CD4-positive, alpha-beta memory T cell (primary cell): ENCODE measurements at regions of chr2 and their contacts with region 1.

Region 1: GRCh38 chr2:224869601-224870233 is 153.6 kb upstream of the CCDC195 start:
- DNase-seq: no peak
- H3K4me3 ChIP-seq: no peak overlapping the region
- H3K4me3 Mint-ChIP-seq: no peak overlapping the region
- H3K27ac ChIP-seq: no peak overlapping the region
- H3K27ac Mint-ChIP-seq: peak overlapping the region in 1 of 7 donors; percentile 13
- H3K4me1 ChIP-seq: no peaks in the 10 kb centered on the region
- H3K4me1 Mint-ChIP-seq: peaks cover 3 to 13% (median 7%) of the 10 kb centered on the region in 4 donors
- H3K27me3 ChIP-seq: no peaks in the 10 kb centered on the region
- H3K27me3 Mint-ChIP-seq: no peaks in the 10 kb centered on the region

Region 2: DNA sequence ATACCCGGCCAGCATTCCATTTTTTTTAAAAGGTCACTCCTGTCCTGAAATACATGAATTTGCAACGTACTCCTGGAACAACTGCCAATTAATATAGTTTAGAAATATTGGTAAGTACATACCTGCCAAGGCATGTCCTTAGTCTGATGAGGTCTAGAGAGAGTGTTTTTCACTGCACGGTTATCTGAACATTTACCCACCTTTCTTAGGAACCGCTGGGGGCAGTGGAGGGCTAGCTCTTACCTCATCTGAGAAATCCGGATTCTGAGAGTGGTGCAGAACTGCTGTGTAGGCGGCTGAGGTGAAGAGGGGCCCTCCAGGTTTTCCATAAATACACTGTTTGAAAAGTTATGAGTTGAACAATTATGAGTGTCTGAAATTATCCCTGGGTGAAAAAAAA is 20.5 kb before region 1 on chr2:
- CTCF ChIA-PET with region 1: no interaction called
- POLR2A ChIA-PET with region 1: no interaction called
- intact Hi-C with region 1: loop called (anchors 2 kb)
- DNase-seq: no peak
- H3K4me3 ChIP-seq: no peak overlapping the region
- H3K4me3 Mint-ChIP-seq: no peak overlapping the region
- H3K27ac ChIP-seq: no peak overlapping the region
- H3K27ac Mint-ChIP-seq: peak overlapping the region in 1 of 7 donors; percentile 65
- H3K4me1 ChIP-seq: no peaks in the 10 kb centered on the region
- H3K4me1 Mint-ChIP-seq: peaks cover 0 to 1% (median 0%) of the 10 kb centered on the region in 4 donors
- H3K27me3 ChIP-seq: no peaks in the 10 kb centered on the region
- H3K27me3 Mint-ChIP-seq: no peaks in the 10 kb centered on the region

Region 3: GRCh38 chr2:225164401-225165050 is 294.8 kb after region 1 on chr2:
- CTCF ChIA-PET with region 1: no interaction called
- POLR2A ChIA-PET with region 1: no interaction called
- intact Hi-C with region 1: no loop called
- DNase-seq: no peak
- H3K4me3 ChIP-seq: no peak overlapping the region
- H3K4me3 Mint-ChIP-seq: no peak overlapping the region
- H3K27ac ChIP-seq: no peak overlapping the region
- H3K27ac Mint-ChIP-seq: no peak overlapping the region
- H3K4me1 ChIP-seq: no peaks in the 10 kb centered on the region
- H3K4me1 Mint-ChIP-seq: no peaks in the 10 kb centered on the region
- H3K27me3 ChIP-seq: no peaks in the 10 kb centered on the region
- H3K27me3 Mint-ChIP-seq: peaks cover 3 to 6% of the 10 kb centered on the region in 2 donors